Dendritic cell treated with granulocyte-macrophage colony-stimulating factor and Interleukin-4, amounts not matched to agents 40 ng/mL and 50 ng/mL, for 4 days (primary cell): ENCODE measurements at regions of chr12 and their contacts with region 1.

Region 1: GRCh38 chr12:133037207-133038005 is at the start of gene ZNF84:
- H3K4me3 Mint-ChIP-seq: peak within 1 kb of the TSS; percentile 90
- H3K27ac Mint-ChIP-seq: peak within 1 kb of the TSS; percentile 95
- H3K4me1 Mint-ChIP-seq: peaks cover 6% of the 10 kb centered on the region
- H3K27me3 Mint-ChIP-seq: no peaks in the 10 kb centered on the region

Region 2: DNA sequence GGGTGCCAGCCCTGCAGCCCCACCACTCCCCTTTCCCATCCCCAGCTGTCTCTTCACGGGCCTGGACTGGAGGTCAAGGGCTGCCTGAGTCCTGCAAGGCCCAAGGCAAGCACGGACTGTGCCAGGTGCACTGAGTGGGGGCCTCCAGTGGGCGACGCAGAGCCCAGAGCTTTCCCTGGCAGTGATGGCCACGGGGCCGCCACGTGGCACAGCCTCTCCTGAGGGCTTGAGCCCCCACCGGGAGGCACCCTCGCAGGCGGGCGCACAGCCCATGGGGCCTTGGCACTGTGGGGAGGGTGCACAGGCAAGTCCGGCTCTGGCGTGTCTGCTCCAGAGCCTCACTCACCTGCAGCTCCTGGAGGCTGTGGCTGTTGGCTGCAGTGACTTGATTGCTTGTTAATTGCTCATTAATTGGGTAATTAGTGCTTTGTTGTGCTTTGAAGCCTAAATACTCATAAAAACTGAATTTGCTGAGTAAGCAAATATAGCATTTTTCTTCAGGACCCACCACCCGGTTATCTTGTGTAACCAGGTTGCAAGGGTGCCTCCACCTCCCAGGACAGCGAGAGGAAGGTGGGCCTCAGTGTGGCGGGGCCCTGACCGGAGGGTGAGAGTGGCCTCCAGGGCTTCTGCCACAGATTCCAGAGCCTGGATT is 498.9 kb before region 1 on chr12:
- intact Hi-C with region 1: no loop called
- H3K4me3 Mint-ChIP-seq: no peak overlapping the region
- H3K27ac Mint-ChIP-seq: no peak overlapping the region
- H3K4me1 Mint-ChIP-seq: peaks cover 12% of the 10 kb centered on the region
- H3K27me3 Mint-ChIP-seq: no peaks in the 10 kb centered on the region

Region 3: DNA sequence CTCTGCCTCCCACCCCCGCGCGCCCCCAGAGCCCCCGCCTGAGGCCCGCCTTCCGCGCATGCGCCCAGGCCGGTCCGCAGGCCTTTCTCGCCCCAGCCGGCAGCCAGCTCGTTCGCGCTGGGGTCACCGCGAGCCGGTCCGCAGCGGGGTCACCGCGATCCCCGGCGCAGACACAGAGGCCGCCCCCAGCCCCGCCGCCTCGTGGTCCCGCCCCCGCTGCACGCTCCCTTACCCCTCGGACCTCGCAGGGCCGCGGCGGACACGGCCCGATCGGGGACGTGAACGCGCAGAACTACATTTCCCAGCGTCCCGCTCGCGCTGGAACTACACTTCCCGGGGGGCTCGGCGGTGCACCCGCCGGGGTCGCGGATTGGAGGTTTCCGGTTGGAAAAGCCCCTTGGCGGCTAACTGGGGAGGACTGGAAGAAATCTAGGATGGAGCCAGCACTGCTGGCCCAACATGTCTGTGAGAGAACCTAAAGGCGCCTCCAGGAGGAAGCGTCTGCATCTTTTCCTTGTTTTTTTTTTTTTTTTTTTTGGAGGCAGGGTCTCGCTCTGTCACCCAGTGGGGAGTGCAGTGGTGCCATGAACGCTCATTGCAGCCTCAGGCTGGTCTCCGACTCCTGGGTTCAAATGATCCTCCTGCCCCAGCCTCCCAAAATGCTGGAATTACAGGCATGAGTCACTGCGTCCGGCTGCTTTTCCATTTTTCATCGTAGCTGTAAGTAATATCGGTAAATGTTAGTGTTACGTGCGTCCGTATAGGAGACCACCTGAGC is 81.2 kb before region 1 on chr12 and contains the start of gene ZNF605:
- intact Hi-C with region 1: no loop called
- H3K4me3 Mint-ChIP-seq: peak within 1 kb of the TSS; percentile 86
- H3K27ac Mint-ChIP-seq: peak within 1 kb of the TSS; percentile 88
- H3K4me1 Mint-ChIP-seq: peaks cover 17% of the 10 kb centered on the region
- H3K27me3 Mint-ChIP-seq: no peaks in the 10 kb centered on the region

Region 4: DNA sequence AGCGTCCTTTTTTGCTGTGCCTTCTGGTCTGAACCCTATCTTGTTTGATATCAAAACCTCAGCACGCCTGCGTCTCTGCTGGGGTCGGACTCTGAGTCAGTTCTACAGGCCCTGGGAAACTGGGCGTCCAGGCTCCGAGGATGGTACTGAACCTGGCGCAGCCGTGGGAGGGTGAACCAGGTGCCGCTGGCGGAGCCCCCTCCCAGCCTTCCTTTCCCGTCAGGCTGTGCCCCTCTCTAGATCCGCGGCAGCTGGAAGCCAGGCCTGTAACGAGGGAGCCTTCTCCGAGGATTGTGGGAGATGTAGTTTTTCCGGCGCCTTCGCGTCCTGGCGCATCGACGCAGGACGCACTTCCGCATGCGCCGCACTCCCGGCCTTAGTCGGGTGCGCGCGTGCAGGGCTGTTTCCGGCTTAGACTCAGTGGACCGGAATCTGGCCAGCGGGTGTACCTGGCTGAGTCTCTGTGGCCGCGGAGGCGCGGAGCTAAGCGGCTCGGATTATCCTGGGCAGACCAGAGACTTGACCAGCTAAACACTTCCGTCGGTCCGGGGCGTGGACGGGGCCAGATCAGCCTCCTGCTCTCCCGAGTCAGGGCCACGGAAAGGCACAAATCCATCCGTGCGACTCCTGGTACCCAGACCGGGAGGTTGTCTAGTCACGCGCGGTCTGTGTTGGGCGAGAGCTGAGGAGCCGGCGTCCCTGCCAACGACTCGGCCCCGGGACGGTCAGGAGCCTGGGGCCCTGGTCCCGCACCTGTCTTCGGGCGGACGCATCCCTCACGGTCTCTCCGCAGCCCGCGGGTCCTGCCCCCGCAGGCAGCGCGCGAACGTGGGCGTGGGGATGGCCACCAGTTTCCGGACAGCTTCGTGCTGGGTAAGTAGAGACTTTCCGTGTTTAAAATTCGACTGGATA is 51.1 kb before region 1 on chr12 and contains the start of gene ZNF26:
- intact Hi-C with region 1: loop called (anchors 1 kb)
- H3K4me3 Mint-ChIP-seq: peak within 1 kb of the TSS; percentile 89
- H3K27ac Mint-ChIP-seq: peak within 1 kb of the TSS; percentile 95
- H3K4me1 Mint-ChIP-seq: peaks cover 16% of the 10 kb centered on the region
- H3K27me3 Mint-ChIP-seq: no peaks in the 10 kb centered on the region

Region 5: GRCh38 chr12:133130038-133130807 is 92.8 kb after region 1 on chr12 and contains the starts of genes ZNF10 and ZNF891:
- intact Hi-C with region 1: loop called (anchors 1 kb)
- H3K4me3 Mint-ChIP-seq: peak within 1 kb of the TSS; percentile 92
- H3K27ac Mint-ChIP-seq: peak within 1 kb of the TSS; percentile 93
- H3K4me1 Mint-ChIP-seq: peaks cover 17% of the 10 kb centered on the region
- H3K27me3 Mint-ChIP-seq: peaks cover 2% of the 10 kb centered on the region